SK-N-SH (cell line): ENCODE measurements at regions of chr2 and their contacts with region 1.

Region 1: DNA sequence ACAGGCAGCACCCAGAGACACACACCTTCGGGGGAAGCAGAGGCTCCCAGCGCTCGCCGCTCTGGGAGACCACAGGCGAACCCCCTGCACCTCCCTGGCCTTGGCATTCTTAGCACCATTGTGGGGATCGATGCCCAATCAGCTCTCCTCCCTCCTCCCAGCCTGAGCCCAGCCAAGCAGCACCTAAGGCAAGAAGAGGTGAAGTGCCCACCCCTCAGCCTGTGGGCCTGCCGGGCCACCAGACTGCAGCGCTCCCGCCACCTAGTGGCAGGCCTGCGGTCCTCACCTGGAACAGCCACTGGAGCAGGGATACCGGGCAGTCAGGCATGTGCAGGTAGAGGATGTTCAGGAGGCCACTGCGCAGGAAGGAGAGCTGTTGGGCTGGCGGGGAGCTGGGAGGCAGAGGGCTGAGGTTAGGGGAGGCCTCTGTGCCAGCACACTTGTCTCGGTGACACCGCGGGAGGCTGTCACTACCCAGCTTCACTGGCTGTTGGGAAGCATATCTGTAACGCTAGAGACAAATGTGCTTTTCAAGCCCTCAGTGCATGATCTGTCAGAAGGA is 35.2 kb downstream of the FAM178B start:
- DNase-seq: peak; percentile 91
- H3K4me3 ChIP-seq: peak overlapping the region in 1 of 2 experiments; percentile 26; a peak in 1 of 4 replicates
- H3K27ac ChIP-seq: no peak overlapping the region
- H3K4me1 ChIP-seq: peaks cover 0 to 36% of the 10 kb centered on the region in 2 experiments; a peak in 2 of 4 replicates
- H3K27me3 ChIP-seq: no peaks in the 10 kb centered on the region
- CTCF ChIP-seq: peak; percentile 86
- EP300 ChIP-seq: no peak
- RAD21 ChIP-seq: peak; percentile 92

Region 2: DNA sequence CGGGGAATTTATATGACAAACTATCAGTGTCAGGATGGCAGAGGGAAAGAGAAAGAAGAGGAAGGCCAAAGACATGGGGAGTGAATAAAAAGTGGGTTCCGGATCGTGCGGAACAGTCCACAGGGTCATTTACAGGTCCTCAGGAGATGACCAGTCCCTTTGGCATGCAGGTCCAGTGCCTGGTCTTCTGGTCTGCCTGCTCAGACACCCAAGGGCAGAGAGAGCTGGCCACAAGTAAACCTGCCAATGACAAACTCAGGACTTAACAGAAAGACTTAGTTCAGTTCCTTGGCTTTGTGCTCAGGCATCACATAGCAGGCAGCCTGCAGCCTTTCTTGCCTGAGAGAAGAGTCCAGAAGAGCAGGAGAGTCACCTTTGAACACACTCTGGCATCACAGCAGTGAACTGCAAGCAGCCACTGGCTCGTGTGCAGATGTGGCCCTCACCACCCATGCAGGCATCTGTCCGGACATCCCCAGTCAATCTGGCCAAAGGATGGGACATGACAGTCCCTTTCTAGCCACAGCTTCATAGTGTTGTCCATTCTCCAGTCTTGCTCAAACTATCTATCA is 699.4 kb before region 1 on chr2:
- CTCF ChIA-PET with region 1: no interaction called
- POLR2A ChIA-PET with region 1: no interaction called
- DNase-seq: peak; percentile 82
- H3K4me3 ChIP-seq: no peak overlapping the region
- H3K27ac ChIP-seq: peak overlapping the region; percentile 58 to 80
- H3K4me1 ChIP-seq: peaks cover 21 to 22% of the 10 kb centered on the region in 2 experiments; a peak in 3 of 4 replicates
- H3K27me3 ChIP-seq: no peaks in the 10 kb centered on the region
- CTCF ChIP-seq: no peak
- EP300 ChIP-seq: no peak
- RAD21 ChIP-seq: no peak

Region 3: GRCh38 chr2:96816128-96816835 is 134.9 kb before region 1 on chr2 and contains the start of gene CNNM3:
- CTCF ChIA-PET with region 1: interaction called, 35 read pairs
- POLR2A ChIA-PET with region 1: no interaction called
- DNase-seq: peak; percentile 99
- H3K4me3 ChIP-seq: peak within 1 kb of the TSS; percentile 73 to 76
- H3K27ac ChIP-seq: peak within 1 kb of the TSS; percentile 39 to 91; a peak in 2 of 4 replicates
- H3K4me1 ChIP-seq: peaks cover 5 to 40% of the 10 kb centered on the region in 2 experiments; a peak in 3 of 4 replicates
- H3K27me3 ChIP-seq: no peaks in the 10 kb centered on the region
- CTCF ChIP-seq: peak; percentile 55
- EP300 ChIP-seq: peak in 1 of 2 experiments; percentile 6; a peak in 1 of 4 replicates
- RAD21 ChIP-seq: no peak
- polyA plus RNA-seq, gene CNNM3: 9.3 and 14.7 TPM in 2 replicates

Region 4: GRCh38 chr2:96868555-96869280 is 82.5 kb before region 1 on chr2:
- CTCF ChIA-PET with region 1: interaction called, 93 read pairs
- POLR2A ChIA-PET with region 1: interaction called, 3 read pairs
- DNase-seq: peak; percentile 97
- H3K4me3 ChIP-seq: peak overlapping the region; percentile 94 to 95
- H3K27ac ChIP-seq: peak overlapping the region; percentile 83 to 92
- H3K4me1 ChIP-seq: peaks cover 9 to 29% of the 10 kb centered on the region in 2 experiments; a peak in 2 of 4 replicates
- H3K27me3 ChIP-seq: no peaks in the 10 kb centered on the region
- CTCF ChIP-seq: peak; percentile 76
- EP300 ChIP-seq: no peak
- RAD21 ChIP-seq: peak; percentile 19; the same call in 1 of the 2 replicates

Region 5: GRCh38 chr2:96921561-96922319 is 29.4 kb before region 1 on chr2:
- CTCF ChIA-PET with region 1: interaction called, 15 read pairs
- POLR2A ChIA-PET with region 1: no interaction called
- DNase-seq: no peak
- H3K4me3 ChIP-seq: no peak overlapping the region
- H3K27ac ChIP-seq: no peak overlapping the region
- H3K4me1 ChIP-seq: peaks cover 0 to under 1% of the 10 kb centered on the region in 2 experiments; a peak in 1 of 4 replicates
- H3K27me3 ChIP-seq: peaks cover 15% of the 10 kb centered on the region; the same call in 1 of the 2 replicates
- CTCF ChIP-seq: no peak
- EP300 ChIP-seq: no peak
- RAD21 ChIP-seq: no peak

Region 6: GRCh38 chr2:96940001-96940615 is 11.1 kb before region 1 on chr2:
- CTCF ChIA-PET with region 1: interaction called, 33 read pairs
- POLR2A ChIA-PET with region 1: no interaction called
- DNase-seq: no peak
- H3K4me3 ChIP-seq: no peak overlapping the region
- H3K27ac ChIP-seq: no peak overlapping the region
- H3K4me1 ChIP-seq: peaks cover 0 to 3% of the 10 kb centered on the region in 2 experiments; a peak in 1 of 4 replicates
- H3K27me3 ChIP-seq: no peaks in the 10 kb centered on the region
- CTCF ChIP-seq: no peak
- EP300 ChIP-seq: no peak
- RAD21 ChIP-seq: no peak